ENCODE measurements at regions of chr17 and their contacts with region 1.

Region 1: DNA sequence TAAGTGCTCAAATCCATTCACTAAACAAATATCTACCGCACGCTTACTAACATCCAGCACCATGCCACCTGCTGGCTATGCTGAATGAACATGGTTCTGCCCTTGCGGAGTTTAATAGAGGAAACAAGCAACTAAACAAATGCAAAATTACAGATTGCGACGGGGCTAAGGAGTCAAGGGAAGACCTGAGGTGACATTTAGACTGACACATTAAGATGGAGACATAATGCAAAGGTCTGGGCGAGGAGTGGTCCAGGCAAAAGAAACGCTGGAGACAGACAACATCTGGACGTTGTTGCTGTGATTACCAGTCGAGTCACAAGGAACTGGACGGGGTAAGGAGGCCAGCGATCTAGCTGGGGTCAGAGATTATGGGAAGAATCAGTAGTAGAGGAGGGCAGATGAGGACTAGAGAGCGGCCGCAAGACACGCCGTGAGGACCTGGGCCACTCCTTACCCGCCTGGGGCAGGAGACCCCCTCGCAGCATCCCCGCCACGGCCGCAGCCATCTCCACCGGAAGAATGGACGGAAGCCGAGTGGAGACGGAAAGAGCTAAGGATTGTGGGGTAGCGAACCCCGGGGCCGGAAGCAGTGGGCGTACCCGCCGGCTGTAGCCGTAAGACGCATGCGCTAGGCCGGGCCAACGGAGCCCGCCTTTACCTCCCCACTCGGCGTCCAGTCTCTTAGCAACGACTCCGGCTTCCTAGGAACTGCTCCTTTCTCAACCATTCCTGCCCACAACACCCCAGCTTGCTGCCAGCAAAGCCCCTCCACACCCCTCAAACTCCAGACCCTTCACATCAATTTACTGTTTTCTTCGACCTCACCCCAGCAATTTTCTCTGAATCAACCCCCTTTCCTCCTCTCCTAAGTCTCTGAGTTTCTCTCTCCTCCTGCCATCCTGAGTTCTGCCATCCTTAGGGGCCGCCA is at the starts of genes LRRC46 and MRPL10:
- DNase-seq: peak; percentile 92 to 96
- ATAC-seq: peak; percentile 58 to 78 (median 66)
- H3K4me3 ChIP-seq: peak within 1 kb of the TSS; percentile 70
- H3K4me3 Mint-ChIP-seq: peak within 1 kb of the TSS; percentile 96
- H3K27ac ChIP-seq: peak within 1 kb of the TSS; percentile 93
- H3K27ac Mint-ChIP-seq: peak within 1 kb of the TSS; percentile 96 to 98
- H3K4me1 ChIP-seq: peaks cover 41% of the 10 kb centered on the region
- H3K4me1 Mint-ChIP-seq: peaks cover 37 to 45% of the 10 kb centered on the region in 2 donors
- H3K27me3 ChIP-seq: no peaks in the 10 kb centered on the region
- H3K27me3 Mint-ChIP-seq: no peaks in the 10 kb centered on the region
- CTCF ChIP-seq: no peak
- total RNA-seq, gene LRRC46: 1.7 to 3.1 (median 2.7) TPM
- total RNA-seq, gene MRPL10: 106 to 232 (median 144) TPM

Region 2: DNA sequence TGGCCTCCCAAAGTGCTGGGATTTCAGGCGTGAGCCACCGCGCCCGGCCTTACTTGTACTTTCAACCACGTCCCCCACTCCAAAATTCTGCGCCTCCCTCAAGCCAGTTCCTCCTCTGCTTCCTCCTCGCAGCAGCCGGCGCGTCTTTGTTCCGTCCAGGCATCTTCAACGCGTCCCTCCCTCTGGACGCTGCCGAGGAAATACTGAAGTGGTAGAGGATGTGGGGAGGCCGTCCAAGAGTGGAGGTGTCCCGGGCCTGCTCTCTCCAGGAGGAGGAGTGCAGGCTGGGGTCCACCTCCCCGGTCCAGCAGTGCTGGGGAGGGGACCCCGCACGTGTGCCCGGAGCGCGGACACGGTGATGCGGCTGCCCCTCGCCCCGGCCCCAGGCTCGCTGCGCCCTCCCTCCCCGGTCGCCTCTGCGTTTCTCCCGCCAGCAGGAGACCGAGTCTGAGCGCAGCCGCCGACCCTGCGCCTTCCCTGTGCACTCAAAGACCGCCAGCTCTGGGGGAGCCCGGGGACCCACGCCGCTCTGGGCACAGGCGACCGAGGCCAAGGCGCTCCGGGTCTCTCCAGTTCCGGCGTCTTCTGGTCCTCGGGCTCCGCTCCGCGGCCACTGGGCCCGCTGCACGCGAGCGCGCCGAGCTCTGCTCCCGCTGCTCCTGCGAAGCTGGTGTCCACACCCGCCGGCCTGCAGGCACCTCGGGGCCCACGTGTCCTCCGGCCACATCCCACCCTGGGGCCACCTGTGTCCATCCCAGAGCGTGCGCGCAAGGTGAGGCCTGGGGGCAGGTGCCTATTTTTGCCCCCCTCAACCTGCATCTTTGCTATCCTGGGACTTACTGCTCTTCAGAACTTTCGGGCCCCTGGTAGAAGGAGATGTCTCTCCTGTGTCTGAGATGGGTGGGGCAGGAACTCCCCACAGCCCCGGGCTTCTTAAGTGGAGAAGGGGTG is 41.4 kb before region 1 on chr17:
- intact Hi-C with region 1: no loop called
- DNase-seq: peak; percentile 52 to 74
- ATAC-seq: peak; percentile 88 to 99 (median 98)
- H3K4me3 ChIP-seq: peak overlapping the region; percentile 29
- H3K4me3 Mint-ChIP-seq: peak overlapping the region; percentile 84
- H3K27ac ChIP-seq: no peak overlapping the region
- H3K27ac Mint-ChIP-seq: no peak overlapping the region
- H3K4me1 ChIP-seq: peaks cover 8% of the 10 kb centered on the region
- H3K4me1 Mint-ChIP-seq: peaks cover 11 to 17% of the 10 kb centered on the region in 2 donors
- H3K27me3 ChIP-seq: peaks cover 27% of the 10 kb centered on the region
- H3K27me3 Mint-ChIP-seq: peaks cover 37 to 42% of the 10 kb centered on the region in 2 donors
- CTCF ChIP-seq: peak; percentile 72

Region 3: GRCh38 chr17:47810205-47810821 is 21.0 kb before region 1 on chr17:
- intact Hi-C with region 1: loop called (anchors 1 kb)
- DNase-seq: peak; percentile 41 to 65
- ATAC-seq: peak; percentile 82 to 87 (median 84)
- H3K4me3 ChIP-seq: no peak overlapping the region
- H3K4me3 Mint-ChIP-seq: peak overlapping the region; percentile 31
- H3K27ac ChIP-seq: peak overlapping the region; percentile 77
- H3K27ac Mint-ChIP-seq: peak overlapping the region; percentile 93
- H3K4me1 ChIP-seq: peaks cover 11% of the 10 kb centered on the region
- H3K4me1 Mint-ChIP-seq: peaks cover 29 to 37% of the 10 kb centered on the region in 2 donors
- H3K27me3 ChIP-seq: no peaks in the 10 kb centered on the region
- H3K27me3 Mint-ChIP-seq: no peaks in the 10 kb centered on the region
- CTCF ChIP-seq: no peak

Region 4: DNA sequence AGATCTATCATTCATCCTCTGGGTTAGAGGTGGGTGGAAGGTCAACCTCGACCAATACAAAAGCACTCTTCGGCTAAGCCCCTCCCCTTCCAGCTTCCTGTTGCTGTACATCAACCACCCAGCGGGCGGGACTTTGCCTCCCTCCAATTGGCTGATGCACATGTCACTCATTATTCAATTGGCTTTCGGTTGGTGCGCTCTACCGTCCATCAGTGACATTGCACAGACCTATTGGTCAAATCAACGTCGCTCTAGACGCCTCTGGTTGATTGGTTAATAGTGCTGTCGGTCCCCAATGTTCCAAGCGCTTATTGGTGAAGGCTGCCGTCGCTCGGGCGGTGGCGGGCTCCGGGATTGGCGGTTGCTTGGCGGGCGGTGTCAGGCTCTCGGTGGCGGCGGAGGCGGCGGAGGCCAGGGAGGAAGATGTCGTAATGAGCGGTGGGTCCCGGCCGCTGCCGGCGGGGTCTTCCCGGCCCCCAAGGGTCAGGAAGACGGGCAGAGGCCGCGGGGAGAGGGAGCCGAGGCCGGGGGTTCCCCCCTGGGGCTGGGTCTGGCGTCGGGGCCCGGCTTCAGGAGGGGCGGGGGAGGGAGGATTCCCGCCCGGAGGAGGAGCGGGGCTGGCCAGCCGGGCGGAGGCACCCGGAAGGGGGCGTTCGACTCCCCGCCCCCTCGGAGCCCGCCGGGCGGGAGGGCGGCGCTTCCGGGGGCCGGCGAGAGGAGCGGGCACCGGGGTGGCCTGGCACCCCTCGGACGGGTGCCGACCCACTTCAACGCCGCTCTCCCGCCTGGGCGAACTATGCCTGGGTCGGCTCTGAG is 64.8 kb after region 1 on chr17 and contains the start of gene SP2:
- intact Hi-C with region 1: loop called (anchors 1 kb)
- DNase-seq: peak; percentile 100
- ATAC-seq: peak; percentile 81 to 95 (median 84)
- H3K4me3 ChIP-seq: peak within 1 kb of the TSS; percentile 83
- H3K4me3 Mint-ChIP-seq: peak within 1 kb of the TSS; percentile 98
- H3K27ac ChIP-seq: peak within 1 kb of the TSS; percentile 90
- H3K27ac Mint-ChIP-seq: peak within 1 kb of the TSS; percentile 95 to 97
- H3K4me1 ChIP-seq: peaks cover 18% of the 10 kb centered on the region
- H3K4me1 Mint-ChIP-seq: peaks cover 43 to 45% of the 10 kb centered on the region in 2 donors
- H3K27me3 ChIP-seq: no peaks in the 10 kb centered on the region
- H3K27me3 Mint-ChIP-seq: no peaks in the 10 kb centered on the region
- CTCF ChIP-seq: no peak
- total RNA-seq, gene SP2: 29.4 to 44.1 (median 33.1) TPM

Measured in natural killer cell (primary cell).